Activated naive CD4-positive, alpha-beta T cell treated with anti-CD3 and anti-CD28 coated beads for 36 hours (primary cell): ENCODE measurements at regions of chr20 and their contacts with region 1.

Region 1: GRCh38 chr20:64062596-64063388 is at the start of gene TCEA2:
- DNase-seq: peak; percentile 98
- H3K4me3 Mint-ChIP-seq: peak within 1 kb of the TSS; percentile 89
- H3K27ac Mint-ChIP-seq: peak within 1 kb of the TSS; percentile 54
- H3K4me1 Mint-ChIP-seq: peaks cover 47% of the 10 kb centered on the region
- H3K27me3 Mint-ChIP-seq: no peaks in the 10 kb centered on the region
- total RNA-seq, gene TCEA2: 16.7 to 18.2 TPM

Region 2: DNA sequence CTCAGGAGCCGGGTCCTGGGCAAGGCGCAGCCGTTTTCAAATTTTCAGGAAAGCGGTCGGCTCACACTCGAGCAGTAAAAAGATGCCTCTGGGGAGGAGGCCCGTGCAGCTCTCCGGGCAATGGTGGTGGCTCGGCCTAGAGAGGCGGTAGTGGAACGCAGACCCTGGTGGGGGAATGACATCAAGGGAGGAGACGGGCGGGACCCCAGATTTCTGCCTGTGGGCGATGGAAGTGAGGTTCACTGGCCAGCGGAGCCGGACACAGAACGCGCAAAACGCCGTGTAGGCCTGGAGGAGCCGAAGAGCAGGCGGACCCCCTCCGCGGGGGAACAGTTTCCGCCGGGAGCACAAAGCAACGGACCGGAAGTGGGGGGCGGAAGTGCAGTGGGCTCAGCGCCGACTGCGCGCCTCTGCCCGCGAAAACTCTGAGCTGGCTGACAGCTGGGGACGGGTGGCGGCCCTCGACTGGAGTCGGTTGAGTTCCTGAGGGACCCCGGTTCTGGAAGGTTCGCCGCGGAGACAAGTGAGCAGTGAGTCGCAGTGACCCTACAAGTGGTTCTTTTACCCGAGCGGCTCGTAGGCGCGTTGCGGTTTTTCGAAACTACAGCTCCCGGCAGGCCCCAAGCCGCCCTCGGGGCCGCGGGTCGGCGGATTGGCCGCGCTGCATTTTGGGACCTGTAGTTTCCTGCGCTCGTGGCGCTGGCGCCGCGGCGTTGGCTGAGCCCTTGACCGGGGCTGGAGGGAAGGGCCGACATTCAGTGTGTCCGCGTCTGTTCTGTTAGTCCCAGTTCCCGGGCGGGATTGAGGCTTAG is 404.6 kb before region 1 on chr20 and contains the start of gene RTEL1:
- CTCF ChIA-PET with region 1: no interaction called
- intact Hi-C with region 1: loop called (anchors 10 kb)
- DNase-seq: peak; percentile 88
- H3K4me3 Mint-ChIP-seq: peak within 1 kb of the TSS; percentile 98
- H3K27ac Mint-ChIP-seq: peak within 1 kb of the TSS; percentile 93
- H3K4me1 Mint-ChIP-seq: peaks cover 38% of the 10 kb centered on the region
- H3K27me3 Mint-ChIP-seq: no peaks in the 10 kb centered on the region
- total RNA-seq, gene RTEL1: 33.6 to 34.8 TPM

Region 3: DNA sequence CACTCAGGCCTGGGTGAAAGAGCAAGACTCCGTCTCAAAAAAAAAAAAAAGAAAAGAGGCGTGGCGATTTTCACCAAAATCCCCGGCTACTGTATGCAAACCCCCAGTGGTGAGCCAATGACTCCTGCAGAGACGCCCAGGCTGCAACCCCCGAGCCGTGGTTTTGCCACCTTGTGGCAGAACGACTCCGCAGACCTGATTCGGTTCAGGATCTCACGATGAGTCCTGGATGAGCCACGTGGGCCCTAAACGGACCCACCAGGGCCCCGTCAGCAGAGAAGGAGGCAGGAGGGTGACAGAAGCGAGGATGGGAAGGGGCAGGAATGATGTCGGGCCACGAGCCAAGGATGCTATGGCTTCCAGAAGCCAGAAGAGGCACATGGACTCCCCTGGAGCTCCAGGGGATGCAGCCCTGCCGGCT is 280.7 kb before region 1 on chr20:
- CTCF ChIA-PET with region 1: no interaction called
- intact Hi-C with region 1: loop called (anchors 10 kb)
- DNase-seq: peak; percentile 65
- H3K4me3 Mint-ChIP-seq: no peak overlapping the region
- H3K27ac Mint-ChIP-seq: no peak overlapping the region
- H3K4me1 Mint-ChIP-seq: peaks cover 11% of the 10 kb centered on the region
- H3K27me3 Mint-ChIP-seq: no peaks in the 10 kb centered on the region

Region 4: GRCh38 chr20:64038565-64039292 is 24.1 kb before region 1 on chr20:
- CTCF ChIA-PET with region 1: interaction called, 16 read pairs
- intact Hi-C with region 1: loop called (anchors 1 kb)
- DNase-seq: peak; percentile 84
- H3K4me3 Mint-ChIP-seq: peak overlapping the region; percentile 67
- H3K27ac Mint-ChIP-seq: no peak overlapping the region
- H3K4me1 Mint-ChIP-seq: peaks cover 53% of the 10 kb centered on the region
- H3K27me3 Mint-ChIP-seq: peaks cover 2% of the 10 kb centered on the region